Heart left ventricle (tissue), 16 donors: ENCODE measurements at regions of chr2 and their contacts with region 1.

Region 1: DNA sequence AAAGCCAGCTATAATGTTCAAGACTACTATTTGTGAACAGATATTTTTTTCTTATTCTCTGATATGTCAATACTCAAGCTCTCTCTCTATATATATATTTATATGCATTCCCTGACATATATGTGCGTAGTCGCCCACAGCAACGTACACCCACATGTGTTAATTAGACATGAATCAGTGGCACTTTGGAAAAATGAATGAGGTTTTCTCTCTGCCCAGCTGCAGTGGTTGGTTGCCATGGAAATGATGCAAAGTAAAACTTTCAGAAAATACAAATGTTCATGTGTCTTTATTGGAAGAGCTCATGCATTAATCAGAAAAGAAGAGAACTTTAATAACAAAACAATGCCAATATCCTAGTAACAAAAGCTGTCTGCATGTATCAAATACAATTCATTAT is 34.7 kb downstream of the UNC80 start:
- DNase-seq: no peak
- ATAC-seq: no peak
- H3K4me3 ChIP-seq: no peak overlapping the region
- H3K27ac ChIP-seq: no peak overlapping the region
- H3K4me1 ChIP-seq: peaks cover 0 to 4% (median 0%) of the 10 kb centered on the region in 12 donors
- H3K27me3 ChIP-seq: no peaks in the 10 kb centered on the region
- CTCF ChIP-seq: no peak
- POLR2A ChIP-seq: no peak

Region 2: DNA sequence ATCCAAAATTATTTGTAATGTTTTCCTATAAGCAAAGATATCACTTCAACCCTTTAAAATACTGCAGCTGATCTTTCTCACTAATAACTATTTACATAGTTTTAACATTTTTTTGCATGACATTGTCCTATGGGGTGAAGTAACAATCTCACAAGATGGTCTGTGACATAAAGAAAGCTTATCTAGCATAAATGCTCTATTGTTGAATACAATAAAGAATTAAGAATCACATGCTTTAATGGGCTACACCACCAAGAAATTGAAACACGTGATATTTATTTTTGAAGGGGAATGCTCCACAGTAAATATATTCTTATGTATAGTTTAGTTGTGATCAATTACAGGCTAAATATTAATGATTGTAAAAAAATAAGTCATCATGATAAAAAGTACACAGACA is 958.7 kb before region 1 on chr2:
- intact Hi-C with region 1: loop called in 1 of 10 experiments (anchors 10 kb)
- DNase-seq: no peak
- ATAC-seq: no peak
- H3K4me3 ChIP-seq: no peak overlapping the region
- H3K27ac ChIP-seq: no peak overlapping the region
- H3K4me1 ChIP-seq: no peaks in the 10 kb centered on the region
- H3K27me3 ChIP-seq: no peaks in the 10 kb centered on the region
- CTCF ChIP-seq: no peak
- POLR2A ChIP-seq: no peak